ENCODE measurements at regions of chr14 and their contacts with region 1.

Region 1: DNA sequence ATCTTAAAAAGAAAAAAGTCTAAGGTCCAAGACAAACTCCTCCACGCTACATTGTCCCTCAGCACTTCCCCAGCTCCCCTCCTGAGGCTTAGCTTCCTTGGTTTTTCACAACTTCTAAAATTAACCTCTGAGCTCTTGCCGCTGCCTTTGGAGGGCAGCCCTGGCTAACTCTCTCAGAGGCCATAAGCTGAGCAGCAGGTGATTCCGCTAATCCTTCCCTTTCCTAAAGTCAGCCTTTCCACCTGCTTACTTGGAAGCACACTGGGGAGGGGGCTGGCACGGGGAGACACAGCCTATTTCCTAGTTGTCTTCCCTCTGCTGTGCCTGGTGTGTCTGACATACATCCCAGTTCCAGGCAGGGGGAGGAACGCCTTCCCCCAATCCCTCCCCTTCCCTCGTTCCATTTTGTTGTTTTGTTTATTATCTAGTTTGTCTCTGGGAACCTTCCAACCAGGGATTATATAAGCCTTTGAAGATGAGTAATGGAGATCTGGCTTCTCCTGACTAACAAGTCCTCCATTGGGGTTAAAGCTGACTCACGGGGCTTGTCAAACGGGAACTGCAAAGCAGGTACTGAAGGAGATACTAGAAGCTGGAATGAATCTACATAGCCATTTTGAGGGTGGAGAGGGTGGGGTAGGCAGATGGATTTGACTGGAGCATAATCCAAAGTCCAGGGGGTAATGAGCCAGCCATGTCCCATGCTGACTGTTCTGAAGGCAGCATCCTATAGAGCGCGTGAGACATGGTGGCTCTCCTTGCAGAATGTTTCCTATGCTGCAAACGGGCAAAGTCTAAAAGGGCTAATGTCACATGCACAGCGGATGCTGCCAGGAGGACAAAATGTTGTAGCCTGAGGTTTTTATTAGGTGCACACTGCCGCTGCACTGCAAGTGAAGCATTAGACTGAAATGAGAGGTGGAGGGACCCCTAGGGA is 230.8 kb downstream of the FOXN3 start:
- DNase-seq: no peak
- ATAC-seq: peak; percentile 61 to 76 (median 69)
- H3K4me3 ChIP-seq: no peak overlapping the region
- H3K27ac ChIP-seq: peak overlapping the region in 11 of 12 donors; percentile 50 to 80 (median 68)
- H3K4me1 ChIP-seq: peaks cover 4 to 47% (median 35%) of the 10 kb centered on the region in 12 donors
- H3K27me3 ChIP-seq: no peaks in the 10 kb centered on the region
- CTCF ChIP-seq: peak in 1 of 12 donors; percentile 25
- POLR2A ChIP-seq: no peak

Region 2: GRCh38 chr14:89093083-89093730 is 93.0 kb before region 1 on chr14:
- intact Hi-C with region 1: no loop called
- DNase-seq: no peak
- ATAC-seq: no peak
- H3K4me3 ChIP-seq: no peak overlapping the region
- H3K27ac ChIP-seq: no peak overlapping the region
- H3K4me1 ChIP-seq: peaks cover 0 to 4% (median 0%) of the 10 kb centered on the region in 12 donors
- H3K27me3 ChIP-seq: no peaks in the 10 kb centered on the region
- CTCF ChIP-seq: no peak
- POLR2A ChIP-seq: no peak

Region 3: DNA sequence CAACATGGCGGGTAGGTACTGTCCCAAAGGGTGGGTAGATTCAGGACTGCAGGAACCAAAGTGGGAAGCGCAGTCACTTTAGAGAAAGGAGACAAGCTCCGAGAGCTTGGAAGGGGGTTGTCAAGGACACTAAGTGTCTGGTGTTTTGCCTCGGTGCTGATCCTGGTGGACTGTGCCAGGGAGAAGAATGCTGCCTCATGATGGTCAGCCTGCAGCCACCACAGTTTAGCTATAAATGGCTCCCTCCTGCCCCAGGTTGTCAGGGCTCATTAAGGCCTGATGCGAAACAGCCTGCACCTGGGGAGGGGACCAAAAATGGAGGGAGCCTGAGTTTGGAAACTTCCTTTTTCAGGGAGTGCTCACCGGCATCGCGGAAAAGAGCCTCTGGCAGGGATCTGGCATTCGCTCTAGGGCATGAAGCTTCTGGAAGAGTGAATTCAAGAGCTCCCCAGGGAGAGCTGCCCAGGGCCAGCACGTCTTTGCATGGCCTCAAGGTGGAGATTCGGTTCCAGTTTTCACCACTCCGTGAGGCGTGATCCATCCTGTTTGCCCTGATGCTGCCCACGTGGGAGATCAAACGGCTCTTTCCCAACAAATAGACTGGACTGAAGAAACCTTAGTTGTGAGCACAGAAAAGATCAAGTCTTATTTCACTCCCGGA is 66.8 kb after region 1 on chr14:
- intact Hi-C with region 1: loop called in 1 of 10 experiments (anchors 5 kb)
- DNase-seq: no peak
- ATAC-seq: peak in 3 of 4 donors; percentile 29 to 42 (median 33)
- H3K4me3 ChIP-seq: no peak overlapping the region
- H3K27ac ChIP-seq: no peak overlapping the region
- H3K4me1 ChIP-seq: peaks cover 0 to 62% (median 36%) of the 10 kb centered on the region in 12 donors
- H3K27me3 ChIP-seq: no peaks in the 10 kb centered on the region
- CTCF ChIP-seq: peak in 1 of 12 donors; percentile 7
- POLR2A ChIP-seq: no peak